GM12878 (cell line): ENCODE measurements at regions of chr9 and their contacts with region 1.

Region 1: DNA sequence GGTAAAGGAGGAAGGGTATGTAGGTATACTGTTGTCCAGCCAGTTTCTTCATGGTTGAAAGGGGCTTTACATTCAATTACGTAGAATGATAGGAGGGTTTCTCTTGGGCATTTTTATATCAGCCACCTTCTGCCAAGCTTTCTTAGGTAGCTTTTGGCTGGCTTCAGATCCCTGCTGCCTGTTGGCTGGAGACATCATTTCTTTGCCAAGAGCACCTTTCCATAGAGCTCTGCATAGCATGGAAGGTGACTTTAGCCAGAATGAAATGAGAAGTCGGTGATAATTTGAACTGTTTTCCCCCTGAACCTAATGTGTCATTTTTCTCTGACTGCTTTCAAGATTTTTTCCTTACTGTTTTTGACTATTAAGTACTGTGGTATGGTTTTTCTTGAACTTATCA is 26.9 kb downstream of the TMEFF1 start:
- DNase-seq: no peak
- ATAC-seq: no peak
- H3K4me3 ChIP-seq: no peak overlapping the region
- H3K27ac ChIP-seq: no peak overlapping the region
- H3K4me1 ChIP-seq: no peaks in the 10 kb centered on the region
- H3K27me3 ChIP-seq: no peaks in the 10 kb centered on the region
- CTCF ChIP-seq: no peak
- EP300 ChIP-seq: no peak
- POLR2A ChIP-seq: no peak
- RAD21 ChIP-seq: no peak

Region 2: DNA sequence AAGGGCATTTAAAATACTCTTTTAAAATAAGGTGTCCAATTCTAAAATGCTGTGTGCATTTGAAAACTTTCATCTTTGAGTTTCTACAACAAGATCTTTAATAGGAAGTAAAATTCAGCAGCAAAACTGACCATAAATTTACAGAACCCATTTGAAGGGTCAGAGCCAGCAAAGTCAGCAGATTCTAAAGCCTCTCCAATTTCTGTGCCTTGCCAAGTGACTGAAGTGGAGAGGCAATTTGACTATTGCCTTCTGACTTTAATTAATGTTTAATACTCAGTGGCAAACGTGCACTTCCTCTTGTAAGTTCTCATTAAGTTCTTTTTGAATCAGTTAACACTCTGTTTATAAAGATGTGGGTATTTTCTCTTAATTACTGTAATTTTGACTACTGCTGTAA is 729.7 kb after region 1 on chr9:
- CTCF ChIA-PET with region 1: no interaction called
- POLR2A ChIA-PET with region 1: no interaction called
- RAD21 ChIA-PET with region 1: no interaction called
- SMC1A ChIA-PET with region 1: interaction called, 3 read pairs
- in situ Hi-C with region 1: no loop called
- intact Hi-C with region 1: loop called (anchors 5 kb)
- DNase-seq: no peak
- ATAC-seq: no peak
- H3K4me3 ChIP-seq: no peak overlapping the region
- H3K27ac ChIP-seq: no peak overlapping the region
- H3K4me1 ChIP-seq: no peaks in the 10 kb centered on the region
- H3K27me3 ChIP-seq: no peaks in the 10 kb centered on the region
- CTCF ChIP-seq: no peak
- EP300 ChIP-seq: no peak
- POLR2A ChIP-seq: no peak
- RAD21 ChIP-seq: no peak